Activated T-helper 1 cell treated with anti-CD3 and anti-CD28 coated beads, Interleukin-12 subunit alpha, Interleukin-12 subunit beta, Interleukin-2, Interleukin-4 antibody, amounts not matched to agents 30 ng/mL and 10 ng/mL and 1 ng/mL, durations not matched to agents 14 hours and 24 hours and 36 hours (primary cell): ENCODE measurements at regions of chr11 and their contacts with region 1.

Region 1: DNA sequence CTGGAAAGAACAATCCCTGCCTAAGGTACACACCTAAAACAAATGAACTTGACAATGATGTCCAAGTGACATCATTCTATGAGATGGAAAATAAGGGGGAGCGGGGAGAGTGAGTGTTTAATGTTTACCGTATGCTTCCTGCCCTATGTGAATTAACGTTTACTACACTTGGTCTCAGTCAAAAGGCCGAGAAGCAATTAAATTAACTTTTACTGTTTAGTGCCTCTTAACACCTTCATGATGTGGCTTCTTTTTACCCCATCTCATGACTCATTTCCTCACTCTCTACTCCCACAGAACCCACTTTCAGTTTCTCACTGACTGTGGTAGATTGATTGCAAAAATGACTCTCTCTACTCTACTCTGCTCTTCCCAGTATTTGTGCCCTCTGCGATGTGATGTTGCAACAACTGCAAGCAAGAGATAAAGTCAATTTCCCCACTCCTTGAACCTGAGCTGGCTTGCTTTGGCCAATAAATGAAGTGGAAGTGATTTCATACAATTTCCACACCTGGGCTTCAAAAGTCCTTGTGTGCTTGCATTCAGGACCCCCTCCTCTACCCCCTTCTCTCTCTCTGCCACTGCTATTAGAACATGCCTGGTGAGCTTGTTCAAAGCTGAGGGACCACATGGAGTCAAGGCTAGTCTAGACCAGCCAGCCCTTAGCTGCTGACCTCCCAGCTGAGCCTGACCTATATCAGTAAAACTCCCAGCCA is 11.6 kb upstream of the ALKBH3 start:
- DNase-seq: peak; percentile 57
- H3K4me3 Mint-ChIP-seq: peak overlapping the region; percentile 45
- H3K27ac Mint-ChIP-seq: peak overlapping the region; percentile 42
- H3K4me1 Mint-ChIP-seq: peaks cover 27% of the 10 kb centered on the region
- H3K27me3 Mint-ChIP-seq: peaks cover 53% of the 10 kb centered on the region

Region 2: GRCh38 chr11:43358801-43359421 is 510.1 kb before region 1 on chr11 and contains the start of gene TTC17:
- intact Hi-C with region 1: loop called (anchors 10 kb)
- DNase-seq: peak; percentile 92
- H3K4me3 Mint-ChIP-seq: peak within 1 kb of the TSS; percentile 94
- H3K27ac Mint-ChIP-seq: peak within 1 kb of the TSS; percentile 92
- H3K4me1 Mint-ChIP-seq: peaks cover 38% of the 10 kb centered on the region
- H3K27me3 Mint-ChIP-seq: peaks cover 2% of the 10 kb centered on the region
- total RNA-seq, gene TTC17: 74.4 and 74.7 TPM in 2 replicates

Region 3: DNA sequence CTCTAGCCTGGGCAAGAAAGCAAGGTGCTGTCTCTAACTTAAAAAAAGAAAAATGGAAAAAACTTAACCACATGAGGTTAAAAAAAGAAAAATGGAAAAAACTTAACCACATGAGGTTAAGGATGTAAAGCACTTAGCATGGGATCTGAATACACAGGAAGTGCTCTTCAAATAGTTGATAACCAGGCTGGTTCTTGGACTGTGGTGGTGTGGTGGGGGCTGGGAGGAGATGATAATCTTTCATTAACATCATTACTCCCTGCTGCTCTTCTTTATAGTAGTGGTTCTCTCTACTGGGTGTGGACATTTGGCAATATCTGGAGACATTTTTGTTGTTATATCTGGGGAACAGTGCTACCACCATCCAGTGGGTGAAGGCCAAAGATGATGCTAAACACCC is 421.9 kb before region 1 on chr11:
- intact Hi-C with region 1: loop called (anchors 5 kb)
- DNase-seq: no peak
- H3K4me3 Mint-ChIP-seq: no peak overlapping the region
- H3K27ac Mint-ChIP-seq: peak overlapping the region; percentile 61
- H3K4me1 Mint-ChIP-seq: peaks cover 18% of the 10 kb centered on the region
- H3K27me3 Mint-ChIP-seq: peaks cover 2% of the 10 kb centered on the region

Region 4: GRCh38 chr11:43830928-43831440 is 38.0 kb before region 1 on chr11:
- intact Hi-C with region 1: loop called (anchors 1 kb)
- DNase-seq: peak; percentile 2
- H3K4me3 Mint-ChIP-seq: no peak overlapping the region
- H3K27ac Mint-ChIP-seq: peak overlapping the region; percentile 80
- H3K4me1 Mint-ChIP-seq: peaks cover 18% of the 10 kb centered on the region
- H3K27me3 Mint-ChIP-seq: no peaks in the 10 kb centered on the region

Region 5: DNA sequence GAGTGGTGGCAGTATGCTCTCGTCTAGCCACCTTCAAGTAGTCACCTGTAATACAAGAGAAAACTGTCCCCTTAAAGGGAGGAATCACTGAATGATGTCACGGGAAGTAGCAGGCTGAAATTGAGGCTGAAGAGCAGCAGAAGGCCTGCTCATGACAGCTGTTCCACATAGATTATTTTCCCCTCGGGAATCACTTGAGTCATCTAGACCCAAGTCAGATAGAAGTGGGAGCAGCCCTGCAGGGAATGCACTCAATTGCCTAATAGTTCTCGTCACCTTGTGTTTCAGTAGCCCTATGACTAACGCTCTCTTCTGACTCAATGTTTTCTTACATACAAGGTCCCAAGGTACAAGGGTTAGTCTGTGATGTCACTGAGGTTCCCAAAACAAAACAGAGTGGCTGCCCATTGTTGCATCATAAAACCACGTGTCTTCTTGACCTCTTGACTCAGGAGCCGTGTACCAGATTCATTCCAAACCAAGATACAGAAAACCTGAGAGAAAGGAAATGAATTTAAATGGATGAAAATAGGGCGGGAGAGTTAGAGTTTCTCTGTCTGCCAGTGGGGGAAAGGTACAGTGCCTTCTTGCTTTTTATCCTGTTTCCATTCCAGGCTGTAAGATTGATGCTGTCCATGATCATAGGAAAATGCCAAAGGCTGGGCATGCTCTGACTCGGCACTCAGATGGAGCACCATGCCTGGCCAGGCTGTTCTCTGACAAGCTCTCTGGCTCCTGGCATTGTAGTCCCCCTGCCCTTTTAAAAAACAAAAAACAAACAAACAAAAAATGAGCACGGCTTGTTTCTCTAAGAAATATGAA is 51.8 kb after region 1 on chr11:
- intact Hi-C with region 1: loop called (anchors 1 kb)
- DNase-seq: no peak
- H3K4me3 Mint-ChIP-seq: no peak overlapping the region
- H3K27ac Mint-ChIP-seq: peak overlapping the region; percentile 74
- H3K4me1 Mint-ChIP-seq: peaks cover 19% of the 10 kb centered on the region
- H3K27me3 Mint-ChIP-seq: no peaks in the 10 kb centered on the region

Region 6: GRCh38 chr11:43937434-43938411 is 68.7 kb after region 1 on chr11:
- intact Hi-C with region 1: no loop called
- DNase-seq: no peak
- H3K4me3 Mint-ChIP-seq: no peak overlapping the region
- H3K27ac Mint-ChIP-seq: no peak overlapping the region
- H3K4me1 Mint-ChIP-seq: peaks cover 5% of the 10 kb centered on the region
- H3K27me3 Mint-ChIP-seq: peaks cover 41% of the 10 kb centered on the region

Region 7: DNA sequence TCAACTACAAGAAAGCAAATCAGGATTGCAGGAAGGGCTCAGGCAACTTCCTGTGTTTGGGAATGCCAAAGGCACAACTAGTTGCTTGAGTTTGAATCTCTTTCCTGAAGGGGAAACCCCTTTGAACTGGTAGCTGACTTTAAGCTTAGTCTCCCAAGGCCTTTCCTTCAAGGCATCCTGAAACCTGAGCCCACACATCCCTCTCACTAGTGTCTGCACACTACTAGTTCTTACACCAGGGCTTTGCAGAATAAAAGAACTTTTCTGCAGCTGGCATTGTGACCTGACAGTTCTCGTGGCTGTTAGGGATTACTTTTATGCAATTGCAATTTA is 321.8 kb after region 1 on chr11:
- intact Hi-C with region 1: loop called (anchors 10 kb)
- DNase-seq: no peak
- H3K4me3 Mint-ChIP-seq: no peak overlapping the region
- H3K27ac Mint-ChIP-seq: no peak overlapping the region
- H3K4me1 Mint-ChIP-seq: peaks cover 15% of the 10 kb centered on the region
- H3K27me3 Mint-ChIP-seq: no peaks in the 10 kb centered on the region